ENCODE measurements at regions of chr3 and their contacts with region 1.

Region 1: GRCh38 chr3:31876331-31876730 is 104.7 kb downstream of the OSBPL10 start:
- DNase-seq: no peak
- ATAC-seq: no peak
- H3K4me3 ChIP-seq: no peak overlapping the region
- H3K27ac ChIP-seq: no peak overlapping the region
- H3K4me1 ChIP-seq: no peaks in the 10 kb centered on the region
- H3K27me3 ChIP-seq: no peaks in the 10 kb centered on the region

Region 2: DNA sequence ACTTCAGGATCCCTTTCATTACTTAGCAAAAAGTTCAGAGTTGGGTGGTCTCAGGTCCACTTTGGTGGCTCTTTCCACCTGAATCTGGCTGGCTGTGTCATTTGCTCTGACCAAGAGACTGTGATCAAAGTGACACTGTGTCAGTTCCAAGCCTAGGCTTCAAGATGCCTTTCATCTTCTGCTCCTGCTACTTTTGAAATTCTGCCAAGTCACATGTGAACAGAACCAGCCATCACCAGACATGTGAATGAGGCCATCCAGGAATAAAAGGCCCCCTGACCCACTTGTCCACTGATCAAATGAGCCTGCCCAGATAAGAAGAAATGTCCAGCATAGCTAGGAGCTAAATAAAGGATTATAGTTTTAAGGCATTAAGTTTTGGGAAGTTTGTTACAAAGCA is 27.4 kb before region 1 on chr3:
- intact Hi-C with region 1: no loop called
- DNase-seq: no peak
- ATAC-seq: no peak
- H3K4me3 ChIP-seq: no peak overlapping the region
- H3K27ac ChIP-seq: no peak overlapping the region
- H3K4me1 ChIP-seq: no peaks in the 10 kb centered on the region
- H3K27me3 ChIP-seq: no peaks in the 10 kb centered on the region

Region 3: GRCh38 chr3:31934018-31934417 is 57.7 kb after region 1 on chr3:
- intact Hi-C with region 1: no loop called
- DNase-seq: no peak
- ATAC-seq: no peak
- H3K4me3 ChIP-seq: no peak overlapping the region
- H3K27ac ChIP-seq: no peak overlapping the region
- H3K4me1 ChIP-seq: peaks cover 0 to 4% of the 10 kb centered on the region in 2 donors
- H3K27me3 ChIP-seq: no peaks in the 10 kb centered on the region

Region 4: DNA sequence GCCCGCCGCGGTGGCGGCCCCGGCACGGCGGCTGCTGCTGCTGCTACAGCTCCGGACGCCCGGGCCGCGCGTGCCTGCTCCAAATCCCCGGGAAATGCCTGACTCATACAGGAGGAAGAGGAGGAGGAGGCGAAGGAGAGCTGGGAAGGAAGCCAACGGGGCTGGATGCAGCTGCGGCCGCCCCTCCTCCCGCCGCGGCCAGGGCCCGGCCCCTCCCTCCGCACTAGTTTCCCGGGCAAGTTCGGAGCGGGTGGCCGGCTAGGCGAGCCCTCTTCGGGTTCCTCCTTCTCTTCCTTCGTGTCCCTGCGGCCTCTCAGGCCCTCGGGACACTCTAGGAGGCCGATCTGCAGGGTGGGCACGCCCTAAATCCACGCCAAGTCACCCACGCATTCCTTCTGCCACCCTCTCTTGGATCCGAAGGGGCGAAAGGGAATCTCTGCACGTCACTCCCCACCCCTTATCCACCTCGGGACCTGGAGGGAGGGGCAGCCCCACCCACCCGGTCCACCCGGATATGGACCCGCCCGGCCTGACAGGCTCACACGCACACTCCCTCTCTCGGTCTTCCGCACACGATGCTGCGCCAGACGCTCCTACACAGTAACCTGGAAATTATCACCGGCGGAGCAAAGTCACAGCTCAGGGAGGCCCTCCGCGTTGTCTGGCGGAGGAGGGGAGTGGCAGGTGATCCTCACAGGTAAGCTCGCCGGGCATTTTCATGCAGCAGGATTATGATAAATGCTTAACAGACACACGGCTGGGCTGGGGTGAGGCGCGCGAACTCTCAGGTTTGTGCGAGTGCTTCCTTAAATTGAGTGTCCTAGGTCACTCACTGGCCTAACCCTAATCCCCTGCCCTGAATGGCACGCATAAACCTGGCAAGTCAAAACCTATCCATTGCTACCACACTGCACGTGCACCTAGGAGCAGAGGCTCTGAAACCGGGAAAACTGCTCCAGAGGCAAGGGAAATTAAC is 105.2 kb after region 1 on chr3 and contains the starts of genes OSBPL10 and ZNF860:
- intact Hi-C with region 1: loop called in 1 of 2 experiments (anchors 2 kb)
- DNase-seq: peak; percentile 94 to 95
- ATAC-seq: peak; percentile 92
- H3K4me3 ChIP-seq: peak within 1 kb of the TSS; percentile 57 to 88
- H3K27ac ChIP-seq: peak within 1 kb of the TSS in 1 of 2 donors; percentile 77
- H3K4me1 ChIP-seq: no peaks in the 10 kb centered on the region
- H3K27me3 ChIP-seq: no peaks in the 10 kb centered on the region
- total RNA-seq, gene OSBPL10: 27.9 to 47.9 TPM
- total RNA-seq, gene ZNF860: 0.65 to 1.8 TPM

Measured in aorta (tissue), 5 donors.